Body of pancreas (tissue), 4 donors: ENCODE measurements at regions of chr21 and their contacts with region 1.

Region 1: GRCh38 chr21:29064850-29065481 is 8.5 kb downstream of the CCT8 start:
- DNase-seq: no peak
- ATAC-seq: no peak
- H3K4me3 ChIP-seq: no peak overlapping the region
- H3K27ac ChIP-seq: no peak overlapping the region
- H3K4me1 ChIP-seq: no peaks in the 10 kb centered on the region
- H3K27me3 ChIP-seq: no peaks in the 10 kb centered on the region
- CTCF ChIP-seq: no peak
- POLR2A ChIP-seq: no peak

Region 2: GRCh38 chr21:28959367-28960099 is 105.4 kb before region 1 on chr21:
- intact Hi-C with region 1: loop called (anchors 10 kb)
- DNase-seq: no peak
- ATAC-seq: no peak
- H3K4me3 ChIP-seq: no peak overlapping the region
- H3K27ac ChIP-seq: no peak overlapping the region
- H3K4me1 ChIP-seq: peaks cover 8% of the 10 kb centered on the region
- H3K27me3 ChIP-seq: no peaks in the 10 kb centered on the region
- CTCF ChIP-seq: no peak
- POLR2A ChIP-seq: no peak

Region 3: DNA sequence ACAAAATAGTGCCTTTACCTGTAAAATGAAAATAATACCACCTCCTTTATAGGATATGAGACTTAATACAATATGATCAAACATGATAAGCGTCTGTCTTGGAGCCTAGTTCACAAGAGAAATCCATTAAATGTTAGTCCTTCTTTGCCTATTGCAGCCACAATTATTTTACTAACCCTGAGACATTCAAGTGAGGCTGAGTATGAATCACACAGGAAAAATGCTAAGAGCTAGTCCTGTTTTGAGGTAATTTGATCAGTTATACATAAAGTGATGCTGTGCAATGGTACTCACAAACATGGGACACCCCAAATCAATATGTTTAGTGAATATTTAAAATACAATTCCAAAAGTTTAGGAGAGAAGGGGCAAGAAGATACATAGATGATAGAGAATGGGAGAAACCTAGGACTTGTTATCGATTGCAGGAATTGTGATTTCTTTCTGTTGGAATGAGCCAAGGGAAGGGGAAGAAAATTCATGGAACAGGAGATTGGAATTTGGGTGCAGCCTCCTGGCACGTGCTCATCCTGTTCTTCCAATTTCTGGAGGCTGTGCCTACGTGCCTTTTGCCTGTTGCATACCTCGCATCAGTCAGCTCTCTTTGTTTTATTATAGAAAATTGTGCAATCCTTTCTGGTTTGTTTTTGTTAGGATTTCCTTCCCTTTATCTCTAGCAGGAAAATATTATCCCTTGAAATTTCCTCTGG is 193.8 kb after region 1 on chr21:
- intact Hi-C with region 1: no loop called
- DNase-seq: peak in 1 of 4 donors; percentile 17
- ATAC-seq: peak; percentile 45
- H3K4me3 ChIP-seq: no peak overlapping the region
- H3K27ac ChIP-seq: no peak overlapping the region
- H3K4me1 ChIP-seq: no peaks in the 10 kb centered on the region
- H3K27me3 ChIP-seq: no peaks in the 10 kb centered on the region
- CTCF ChIP-seq: no peak
- POLR2A ChIP-seq: no peak

Region 4: GRCh38 chr21:29786496-29787360 is 721.8 kb after region 1 on chr21:
- intact Hi-C with region 1: no loop called
- DNase-seq: no peak
- ATAC-seq: peak; percentile 66
- H3K4me3 ChIP-seq: no peak overlapping the region
- H3K27ac ChIP-seq: peak overlapping the region in 3 of 4 donors; percentile 5 to 30 (median 27)
- H3K4me1 ChIP-seq: peaks cover 42% of the 10 kb centered on the region
- H3K27me3 ChIP-seq: no peaks in the 10 kb centered on the region
- CTCF ChIP-seq: no peak
- POLR2A ChIP-seq: no peak